ENCODE measurements at regions of chr12 and their contacts with region 1.

Region 1: GRCh38 chr12:11621797-11622423 is 27.6 kb upstream of the ETV6 start:
- DNase-seq: peak in 1 of 2 donors; percentile 17
- ATAC-seq: no peak
- H3K4me3 ChIP-seq: no peak overlapping the region
- H3K27ac ChIP-seq: no peak overlapping the region
- H3K4me1 ChIP-seq: no peaks in the 10 kb centered on the region
- H3K27me3 ChIP-seq: no peaks in the 10 kb centered on the region
- CTCF ChIP-seq: peak in 3 of 5 experiments; percentile 29 to 48 (median 31)
- POLR2A ChIP-seq: no peak

Region 2: GRCh38 chr12:11545484-11546330 is 76.2 kb before region 1 on chr12:
- in situ Hi-C with region 1: no loop called
- intact Hi-C with region 1: no loop called
- DNase-seq: no peak
- ATAC-seq: no peak
- H3K4me3 ChIP-seq: no peak overlapping the region
- H3K27ac ChIP-seq: no peak overlapping the region
- H3K4me1 ChIP-seq: no peaks in the 10 kb centered on the region
- H3K27me3 ChIP-seq: no peaks in the 10 kb centered on the region
- CTCF ChIP-seq: no peak
- POLR2A ChIP-seq: no peak

Region 3: GRCh38 chr12:11891754-11892386 is 270.0 kb after region 1 on chr12:
- in situ Hi-C with region 1: no loop called
- intact Hi-C with region 1: loop called (anchors 5 kb)
- DNase-seq: no peak
- ATAC-seq: no peak
- H3K4me3 ChIP-seq: no peak overlapping the region
- H3K27ac ChIP-seq: no peak overlapping the region
- H3K4me1 ChIP-seq: no peaks in the 10 kb centered on the region
- H3K27me3 ChIP-seq: no peaks in the 10 kb centered on the region
- CTCF ChIP-seq: peak in 3 of 5 experiments; percentile 23 to 49 (median 48)
- POLR2A ChIP-seq: no peak

Region 4: DNA sequence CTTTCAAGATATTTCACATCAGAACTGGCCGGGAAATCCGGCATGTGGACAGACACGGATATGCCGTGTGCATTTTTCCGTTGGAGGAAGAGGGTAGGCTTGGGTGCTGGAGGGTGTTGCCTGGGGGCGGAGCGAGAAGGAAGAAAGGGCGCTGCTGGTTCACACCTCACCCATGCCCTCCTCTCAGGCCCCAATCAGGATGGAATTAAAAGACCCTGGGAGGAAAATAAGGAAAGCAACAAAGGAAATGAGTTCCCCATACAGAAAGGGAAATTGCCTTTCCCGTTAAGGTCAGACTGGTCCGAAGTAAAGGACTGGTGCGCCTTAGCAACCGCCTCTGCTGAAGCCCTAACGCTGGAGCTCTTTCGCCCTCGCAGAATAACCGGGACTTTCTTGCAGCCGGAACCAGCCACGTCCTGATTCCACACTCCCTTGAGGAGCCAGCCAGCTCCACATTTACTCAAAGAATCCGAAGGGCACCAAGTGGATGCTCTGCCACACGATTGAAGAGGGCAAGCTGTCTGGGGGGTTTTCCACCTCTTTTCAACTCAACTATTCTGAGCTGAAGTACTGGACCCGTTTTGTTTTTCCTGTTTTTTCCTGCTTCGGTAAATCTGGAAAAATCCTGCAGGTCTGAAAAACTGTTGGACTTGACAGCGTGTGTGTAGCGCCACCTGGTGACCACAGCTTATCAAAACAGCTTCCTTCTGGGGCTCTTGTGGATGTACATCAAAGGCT is 411.1 kb after region 1 on chr12:
- in situ Hi-C with region 1: no loop called
- intact Hi-C with region 1: loop called (anchors 1 kb)
- DNase-seq: peak; percentile 35 to 54
- ATAC-seq: peak; percentile 76 to 80
- H3K4me3 ChIP-seq: peak overlapping the region; percentile 35 to 64 (median 49)
- H3K27ac ChIP-seq: peak overlapping the region in 3 of 4 donors; percentile 13 to 49 (median 37)
- H3K4me1 ChIP-seq: no peaks in the 10 kb centered on the region
- H3K27me3 ChIP-seq: no peaks in the 10 kb centered on the region
- CTCF ChIP-seq: peak; percentile 81 to 89 (median 85)
- POLR2A ChIP-seq: no peak

Measured in gastrocnemius medialis (tissue), 4 donors.